ENCODE measurements at regions of chr20 and their contacts with region 1.

Region 1: GRCh38 chr20:5078399-5078958 is 41.3 kb downstream of the PCNA start:
- DNase-seq: peak; percentile 95
- H3K4me3 Mint-ChIP-seq: peak overlapping the region; percentile 60
- H3K27ac Mint-ChIP-seq: peak overlapping the region; percentile 92
- H3K4me1 Mint-ChIP-seq: peaks cover 41% of the 10 kb centered on the region
- H3K27me3 Mint-ChIP-seq: no peaks in the 10 kb centered on the region

Region 2: DNA sequence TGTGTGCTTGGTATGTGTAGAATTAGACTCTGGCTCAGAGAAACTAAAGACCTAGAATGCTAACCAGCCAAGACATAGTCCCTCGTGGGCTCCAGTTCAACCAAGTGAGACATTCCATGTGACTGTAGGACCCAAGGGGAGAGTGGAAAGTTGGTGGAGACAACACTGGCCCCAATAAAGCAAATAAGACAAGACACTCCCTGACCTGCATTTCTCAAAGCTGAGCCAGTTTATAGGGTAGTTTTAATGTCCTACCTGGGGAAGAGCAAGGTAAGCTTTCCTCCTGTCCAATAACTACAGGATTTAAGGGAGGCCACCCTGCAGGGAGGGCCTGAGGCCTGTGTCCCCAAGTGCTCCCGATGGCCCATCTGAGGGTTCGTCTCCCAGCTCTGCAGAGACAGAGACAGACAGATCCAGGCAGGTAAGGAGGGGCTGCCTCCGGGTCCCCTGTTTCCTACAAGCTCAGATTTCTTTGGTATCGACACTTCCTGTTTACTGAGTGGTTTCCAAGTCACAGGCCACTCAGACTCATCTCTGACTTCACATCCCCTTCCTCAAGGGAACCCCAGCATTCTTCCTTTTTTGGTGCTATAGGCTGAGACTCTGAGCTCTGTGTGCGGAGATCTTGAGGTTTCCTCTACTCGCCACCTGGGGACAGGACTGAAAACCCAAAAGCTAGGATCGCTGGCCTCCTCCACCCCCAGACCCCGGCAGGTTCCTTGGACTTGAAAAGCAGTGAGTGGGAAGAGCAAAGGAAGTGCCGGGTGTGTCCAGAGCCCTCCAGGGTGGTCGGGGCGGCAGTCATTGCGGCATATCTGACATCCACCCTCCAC is 264.4 kb before region 1 on chr20:
- CTCF ChIA-PET with region 1: interaction called, 4 read pairs
- intact Hi-C with region 1: loop called (anchors 1 kb)
- DNase-seq: peak; percentile 72
- H3K4me3 Mint-ChIP-seq: peak overlapping the region; percentile 93
- H3K27ac Mint-ChIP-seq: peak overlapping the region; percentile 98
- H3K4me1 Mint-ChIP-seq: peaks cover 72% of the 10 kb centered on the region
- H3K27me3 Mint-ChIP-seq: no peaks in the 10 kb centered on the region

Region 3: GRCh38 chr20:5001174-5002076 is 77.1 kb before region 1 on chr20 and contains the start of gene SLC23A2:
- CTCF ChIA-PET with region 1: no interaction called
- intact Hi-C with region 1: loop called (anchors 2 kb)
- DNase-seq: peak; percentile 60
- H3K4me3 Mint-ChIP-seq: peak within 1 kb of the TSS; percentile 87
- H3K27ac Mint-ChIP-seq: peak within 1 kb of the TSS; percentile 79
- H3K4me1 Mint-ChIP-seq: peaks cover 30% of the 10 kb centered on the region
- H3K27me3 Mint-ChIP-seq: no peaks in the 10 kb centered on the region
- total RNA-seq, gene SLC23A2: 16.4 to 18.1 TPM

Region 4: DNA sequence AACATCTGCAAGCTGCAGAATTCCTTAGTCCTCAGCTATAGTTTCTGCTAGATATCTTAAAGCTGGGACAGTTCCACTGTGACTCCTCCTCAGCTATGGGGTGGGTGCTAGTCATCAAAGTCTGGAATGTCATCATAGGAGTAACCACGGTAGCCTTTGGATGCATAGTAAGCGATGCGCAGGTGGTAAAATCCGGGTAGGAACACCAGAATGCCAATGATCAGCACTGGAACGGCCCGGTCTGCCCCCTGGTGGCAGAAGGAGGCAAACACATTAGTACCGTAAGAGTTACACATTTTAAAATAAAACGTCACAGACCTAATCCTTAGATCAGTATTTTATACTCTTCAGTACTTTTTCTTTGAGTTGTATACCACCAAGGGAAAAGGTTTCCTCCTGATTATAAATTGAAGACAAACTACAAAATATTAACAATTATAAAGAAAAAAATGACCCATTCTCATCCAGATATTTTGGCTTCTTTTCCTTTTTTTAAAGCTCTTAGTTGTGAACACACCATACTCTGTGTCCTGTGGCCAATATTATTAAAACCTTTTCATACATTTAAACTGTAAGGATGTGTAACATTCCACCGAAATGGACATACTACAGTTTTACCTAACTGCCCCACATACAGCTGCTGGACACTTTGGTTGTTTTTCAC is 22.3 kb after region 1 on chr20:
- CTCF ChIA-PET with region 1: interaction called, 23 read pairs
- intact Hi-C with region 1: loop called (anchors 1 kb)
- DNase-seq: peak; percentile 84
- H3K4me3 Mint-ChIP-seq: no peak overlapping the region
- H3K27ac Mint-ChIP-seq: no peak overlapping the region
- H3K4me1 Mint-ChIP-seq: peaks cover 8% of the 10 kb centered on the region
- H3K27me3 Mint-ChIP-seq: no peaks in the 10 kb centered on the region

Region 5: GRCh38 chr20:5191829-5192569 is 113.5 kb after region 1 on chr20:
- CTCF ChIA-PET with region 1: no interaction called
- intact Hi-C with region 1: loop called (anchors 1 kb)
- DNase-seq: peak; percentile 67
- H3K4me3 Mint-ChIP-seq: no peak overlapping the region
- H3K27ac Mint-ChIP-seq: peak overlapping the region; percentile 78
- H3K4me1 Mint-ChIP-seq: peaks cover 19% of the 10 kb centered on the region
- H3K27me3 Mint-ChIP-seq: no peaks in the 10 kb centered on the region

Region 6: GRCh38 chr20:5504061-5504739 is 425.7 kb after region 1 on chr20:
- CTCF ChIA-PET with region 1: no interaction called
- intact Hi-C with region 1: no loop called
- DNase-seq: no peak
- H3K4me3 Mint-ChIP-seq: peak overlapping the region; percentile 24
- H3K27ac Mint-ChIP-seq: no peak overlapping the region
- H3K4me1 Mint-ChIP-seq: peaks cover 3% of the 10 kb centered on the region
- H3K27me3 Mint-ChIP-seq: peaks cover 12% of the 10 kb centered on the region

Measured in activated naive CD4-positive, alpha-beta T cell treated with anti-CD3 and anti-CD28 coated beads for 36 hours (primary cell).